Heart right ventricle (tissue), 16 donors: ENCODE measurements at regions of chr4 and their contacts with region 1.

Region 1: GRCh38 chr4:57309658-57310057 is 199.5 kb upstream of the IGFBP7 start:
- DNase-seq: no peak
- ATAC-seq: no peak
- H3K4me3 ChIP-seq: no peak overlapping the region
- H3K27ac ChIP-seq: no peak overlapping the region
- H3K4me1 ChIP-seq: no peaks in the 10 kb centered on the region
- H3K27me3 ChIP-seq: peaks cover 0 to 10% (median 0%) of the 10 kb centered on the region in 7 donors
- CTCF ChIP-seq: no peak

Region 2: GRCh38 chr4:57168982-57169381 is 140.7 kb before region 1 on chr4:
- intact Hi-C with region 1: loop called in 4 of 10 experiments (anchors 5 to 10 kb)
- DNase-seq: no peak
- ATAC-seq: no peak
- H3K4me3 ChIP-seq: no peak overlapping the region
- H3K27ac ChIP-seq: no peak overlapping the region
- H3K4me1 ChIP-seq: peaks cover 0 to 6% (median 4%) of the 10 kb centered on the region in 9 donors
- H3K27me3 ChIP-seq: peaks cover 0 to 12% (median 0%) of the 10 kb centered on the region in 7 donors
- CTCF ChIP-seq: no peak